BJ (cell line): ENCODE measurements at regions of chr4 and their contacts with region 1.

Region 1: GRCh38 chr4:77095101-77095821 is 19.5 kb upstream of the CCNI start:
- DNase-seq: no peak
- H3K4me3 ChIP-seq: no peak overlapping the region
- H3K27me3 ChIP-seq: no peaks in the 10 kb centered on the region
- CTCF ChIP-seq: peak; percentile 95

Region 2: DNA sequence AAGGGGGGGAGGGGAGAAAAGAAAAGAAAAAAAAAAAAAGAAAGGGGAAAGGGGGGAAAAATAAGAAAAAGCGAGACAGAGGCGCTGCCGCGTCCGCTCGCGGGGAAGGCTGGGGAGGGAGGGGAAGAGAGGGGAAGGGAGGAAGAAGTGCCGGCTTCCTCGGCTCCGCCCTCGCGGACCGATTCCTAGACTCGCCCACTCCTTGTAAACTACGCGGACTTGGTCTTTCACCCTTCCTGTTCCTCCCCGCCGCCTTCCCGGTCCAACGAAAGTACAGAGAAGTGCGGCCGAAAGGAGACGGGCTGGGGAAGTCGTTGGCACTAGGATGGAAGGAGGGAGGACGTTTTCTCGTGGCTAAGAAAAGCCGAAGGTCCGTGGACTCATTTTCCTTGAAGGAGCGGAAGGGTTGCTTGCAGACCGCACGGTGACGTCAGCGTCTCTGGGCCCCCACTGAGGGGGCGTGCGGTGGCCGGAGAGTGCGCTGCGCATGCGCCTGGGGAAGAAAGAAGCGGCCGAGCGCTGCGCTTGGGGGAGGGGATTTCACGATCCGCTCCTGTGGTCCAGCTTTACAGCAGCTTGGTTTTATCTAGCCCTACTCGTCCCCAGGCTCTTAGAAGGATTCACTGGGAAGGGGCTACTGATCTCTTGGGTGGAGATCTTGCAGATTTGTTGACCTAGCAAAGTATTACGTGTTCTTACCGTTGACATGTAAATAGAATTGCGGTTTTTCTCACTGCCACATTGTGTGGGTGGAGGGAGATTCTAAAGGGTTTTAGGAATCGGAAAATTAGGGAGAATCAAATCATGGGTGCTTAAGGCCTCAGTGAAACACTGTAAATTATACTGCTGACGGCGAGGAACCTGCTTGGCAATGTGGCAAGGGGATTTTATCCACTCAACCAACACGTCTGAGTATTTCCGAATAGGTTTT is 19.1 kb before region 1 on chr4 and contains the start of gene CCNI:
- CTCF ChIA-PET with region 1: interaction called, 24 read pairs
- POLR2A ChIA-PET with region 1: no interaction called
- DNase-seq: peak; percentile 82
- H3K4me3 ChIP-seq: peak within 1 kb of the TSS; percentile 84
- H3K27me3 ChIP-seq: no peaks in the 10 kb centered on the region
- CTCF ChIP-seq: no peak
- polyA plus RNA-seq, gene CCNI: 85.1 and 109 TPM in 2 replicates

Region 3: GRCh38 chr4:77082886-77083608 is 12.2 kb before region 1 on chr4:
- CTCF ChIA-PET with region 1: interaction called, 22 read pairs
- POLR2A ChIA-PET with region 1: no interaction called
- DNase-seq: no peak
- H3K4me3 ChIP-seq: no peak overlapping the region
- H3K27me3 ChIP-seq: no peaks in the 10 kb centered on the region
- CTCF ChIP-seq: no peak

Region 4: GRCh38 chr4:77126809-77127208 is 31.5 kb after region 1 on chr4:
- CTCF ChIA-PET with region 1: interaction called, 38 read pairs
- POLR2A ChIA-PET with region 1: no interaction called
- DNase-seq: no peak
- H3K4me3 ChIP-seq: no peak overlapping the region
- H3K27me3 ChIP-seq: peaks cover 5% of the 10 kb centered on the region
- CTCF ChIP-seq: no peak

Region 5: GRCh38 chr4:77209936-77210335 is 114.7 kb after region 1 on chr4:
- CTCF ChIA-PET with region 1: interaction called, 120 read pairs
- POLR2A ChIA-PET with region 1: no interaction called
- DNase-seq: no peak
- H3K4me3 ChIP-seq: no peak overlapping the region
- H3K27me3 ChIP-seq: peaks cover 5% of the 10 kb centered on the region
- CTCF ChIP-seq: no peak

Region 6: DNA sequence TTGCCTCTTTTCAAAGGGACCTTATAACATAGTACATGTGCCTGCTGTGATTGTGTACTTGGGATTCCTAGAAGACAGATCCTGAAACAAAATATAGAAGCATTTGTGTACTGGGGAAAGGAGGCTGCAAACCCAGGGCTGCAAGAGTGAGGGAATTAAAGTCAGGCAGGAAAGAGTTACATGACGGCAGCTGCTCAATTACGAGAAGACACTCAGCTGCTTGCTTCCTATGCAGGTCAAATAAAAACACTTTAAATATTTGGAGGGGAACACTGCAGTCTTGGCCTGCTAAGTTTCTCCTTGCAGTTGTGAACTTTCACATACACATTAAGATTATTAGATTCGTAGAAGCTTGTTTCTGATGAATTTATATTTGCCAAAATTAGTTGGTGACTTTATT is 318.5 kb after region 1 on chr4:
- CTCF ChIA-PET with region 1: no interaction called
- POLR2A ChIA-PET with region 1: no interaction called
- DNase-seq: no peak
- H3K4me3 ChIP-seq: no peak overlapping the region
- H3K27me3 ChIP-seq: peaks cover 1% of the 10 kb centered on the region; the same call in 1 of the 2 replicates
- CTCF ChIP-seq: no peak